ENCODE measurements at regions of chrX and their contacts with region 1.

Region 1: DNA sequence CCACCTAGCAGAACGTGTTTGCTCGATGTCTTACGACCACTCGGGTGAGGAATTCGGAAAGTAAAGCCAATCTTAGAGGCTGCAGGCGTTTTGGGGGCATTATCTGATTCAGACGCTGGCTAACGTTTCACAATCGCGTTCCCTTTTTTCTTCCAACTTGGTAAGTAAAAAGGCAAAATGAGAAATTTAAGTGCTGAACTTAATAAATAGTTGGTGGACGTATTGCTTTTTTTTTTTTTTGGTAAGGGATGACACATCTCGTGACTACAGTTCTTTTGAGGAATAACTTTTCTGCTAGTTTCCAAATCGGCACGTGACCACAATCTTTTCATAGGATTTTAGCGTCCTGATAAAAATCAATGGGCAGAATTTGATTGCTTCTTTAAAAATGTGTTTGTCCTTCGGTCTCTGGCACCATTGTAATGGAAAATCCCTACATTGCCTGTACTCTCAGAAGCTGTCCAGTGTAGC is 848 bp downstream of the RAB9A start:
- DNase-seq: no peak
- ATAC-seq: no peak
- H3K4me3 ChIP-seq: peak overlapping the region; percentile 70 to 80
- H3K27ac ChIP-seq: peak overlapping the region; percentile 80
- H3K4me1 ChIP-seq: peaks cover 40 to 66% of the 10 kb centered on the region in 2 experiments
- H3K27me3 ChIP-seq: no peaks in the 10 kb centered on the region
- CTCF ChIP-seq: no peak
- POLR2A ChIP-seq: no peak
- RAD21 ChIP-seq: no peak

Region 2: DNA sequence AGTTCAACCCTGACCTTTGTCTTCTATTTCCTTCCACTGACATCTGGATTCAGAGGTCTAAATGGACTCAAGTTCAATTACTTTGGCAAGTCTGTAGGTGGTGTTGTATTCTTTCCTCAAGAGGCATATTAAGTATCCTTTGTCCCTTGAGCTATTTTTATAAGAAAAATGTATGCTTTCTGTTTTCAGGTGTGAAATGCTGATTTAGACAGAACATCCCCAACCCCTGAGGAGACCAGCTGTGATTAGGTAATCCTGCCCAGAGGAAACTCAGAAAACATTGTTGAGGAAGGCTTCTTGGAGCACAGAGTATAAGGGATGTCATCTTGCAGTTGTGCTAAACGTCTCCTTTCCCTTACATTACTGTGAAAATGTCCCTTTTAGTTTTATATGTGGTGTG is 167.0 kb before region 1 on chrX:
- CTCF ChIA-PET with region 1: no interaction called
- POLR2A ChIA-PET with region 1: no interaction called
- RAD21 ChIA-PET with region 1: no interaction called
- intact Hi-C with region 1: no loop called
- DNase-seq: no peak
- ATAC-seq: no peak
- H3K4me3 ChIP-seq: no peak overlapping the region
- H3K27ac ChIP-seq: no peak overlapping the region
- H3K4me1 ChIP-seq: no peaks in the 10 kb centered on the region
- H3K27me3 ChIP-seq: no peaks in the 10 kb centered on the region
- CTCF ChIP-seq: 0 out of 6 replicates have a peak, but pooled peaks of 1 of the 3 experiments have one; percentile 6
- POLR2A ChIP-seq: no peak
- RAD21 ChIP-seq: peak; percentile 21; the same call in 1 of the 2 replicates

Region 3: DNA sequence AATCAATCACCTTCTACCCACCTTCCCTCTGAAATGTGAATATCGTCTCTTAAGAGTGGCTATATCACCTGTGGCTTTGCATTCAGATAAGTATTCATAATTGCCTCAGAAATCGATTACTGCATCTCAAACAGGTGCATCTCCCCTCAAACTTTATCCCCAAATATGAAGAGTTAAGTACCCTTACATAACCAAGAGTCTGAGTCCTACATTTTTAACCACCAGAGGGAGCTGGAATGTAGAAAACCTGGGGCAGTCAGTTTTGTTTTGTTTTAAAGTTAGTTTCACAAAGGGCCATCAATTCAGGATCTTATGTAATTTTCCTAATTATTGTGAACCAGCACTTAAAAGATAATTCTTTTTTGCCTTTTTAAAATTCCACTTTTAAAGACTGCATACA is 31.2 kb before region 1 on chrX:
- CTCF ChIA-PET with region 1: interaction called, 7 read pairs
- POLR2A ChIA-PET with region 1: no interaction called
- RAD21 ChIA-PET with region 1: no interaction called
- intact Hi-C with region 1: loop called (anchors 2 kb)
- DNase-seq: peak; percentile 35
- ATAC-seq: peak; percentile 40; the same call in 1 of the 2 replicates
- H3K4me3 ChIP-seq: no peak overlapping the region
- H3K27ac ChIP-seq: no peak overlapping the region
- H3K4me1 ChIP-seq: peaks cover 9 to 10% of the 10 kb centered on the region in 2 experiments
- H3K27me3 ChIP-seq: no peaks in the 10 kb centered on the region
- CTCF ChIP-seq: peak; percentile 42 to 72 (median 64)
- POLR2A ChIP-seq: no peak
- RAD21 ChIP-seq: peak; percentile 81

Region 4: DNA sequence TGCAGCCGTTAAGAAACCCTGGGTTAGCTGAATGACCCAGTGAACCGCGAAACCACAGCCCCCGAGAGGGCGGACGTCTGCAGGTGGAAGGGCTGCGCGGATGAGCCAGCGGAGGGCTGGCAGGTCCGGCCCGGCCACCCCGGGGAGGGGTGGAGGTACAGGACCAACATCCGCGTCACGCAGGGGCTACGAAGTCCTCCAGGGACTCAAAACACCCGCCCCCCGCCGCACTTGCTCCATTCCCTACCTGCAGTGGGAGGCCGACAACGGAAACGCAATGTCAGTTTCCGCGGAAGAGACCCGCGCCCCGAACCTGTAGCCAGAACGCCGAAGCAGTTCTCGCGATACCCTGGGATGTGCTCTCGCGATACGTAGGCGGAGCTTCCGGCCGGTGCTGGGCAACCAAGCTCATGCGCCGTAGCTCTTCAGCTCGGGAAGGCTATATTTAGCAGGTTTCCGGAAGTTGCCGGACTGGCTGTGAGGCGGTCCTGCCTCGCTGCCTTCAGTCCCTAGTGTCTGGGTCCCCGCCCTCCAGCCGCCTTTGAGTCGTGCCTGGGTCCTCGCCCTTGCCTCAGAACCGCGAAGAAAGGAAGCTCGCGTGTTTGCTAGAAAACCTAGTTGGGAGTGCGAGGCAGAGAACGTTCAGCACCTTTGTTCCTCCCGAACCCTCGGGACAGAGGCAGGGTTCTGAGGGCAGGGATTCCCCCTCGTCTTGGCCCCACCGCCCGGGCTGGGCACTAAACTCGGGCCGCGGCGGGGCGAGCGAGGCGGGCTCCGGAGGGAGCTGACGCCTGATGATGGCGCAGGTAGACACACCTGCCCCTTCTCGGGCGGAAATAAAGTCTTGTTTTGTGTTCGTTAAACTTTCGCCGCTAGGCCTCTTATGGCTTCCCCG is 44.7 kb after region 1 on chrX and contains the starts of genes OFD1 and TRAPPC2:
- CTCF ChIA-PET with region 1: no interaction called
- POLR2A ChIA-PET with region 1: interaction called, 3 read pairs
- RAD21 ChIA-PET with region 1: no interaction called
- intact Hi-C with region 1: loop called (anchors 5 kb)
- DNase-seq: peak; percentile 87
- ATAC-seq: peak; percentile 97
- H3K4me3 ChIP-seq: peak within 1 kb of the TSS; percentile 67 to 84
- H3K27ac ChIP-seq: peak within 1 kb of the TSS; percentile 88
- H3K4me1 ChIP-seq: peaks cover 3 to 5% of the 10 kb centered on the region in 2 experiments; a peak in 2 of 4 replicates
- H3K27me3 ChIP-seq: no peaks in the 10 kb centered on the region
- CTCF ChIP-seq: no peak
- POLR2A ChIP-seq: peak; percentile 52
- RAD21 ChIP-seq: no peak
- total RNA-seq, gene OFD1: 18.0 TPM
- total RNA-seq, gene TRAPPC2: 11.9 TPM

Measured in HCT116 (cell line).